ENCODE measurements at regions of chr17 and their contacts with region 1.

Region 1: GRCh38 chr17:82403662-82404660 is 14.2 kb upstream of the HEXD start:
- DNase-seq: no peak
- H3K4me3 ChIP-seq: no peak overlapping the region
- H3K27ac ChIP-seq: no peak overlapping the region
- H3K4me1 ChIP-seq: no peaks in the 10 kb centered on the region
- H3K27me3 ChIP-seq: no peaks in the 10 kb centered on the region
- CTCF ChIP-seq: no peak
- EP300 ChIP-seq: no peak
- POLR2A ChIP-seq: no peak

Region 2: DNA sequence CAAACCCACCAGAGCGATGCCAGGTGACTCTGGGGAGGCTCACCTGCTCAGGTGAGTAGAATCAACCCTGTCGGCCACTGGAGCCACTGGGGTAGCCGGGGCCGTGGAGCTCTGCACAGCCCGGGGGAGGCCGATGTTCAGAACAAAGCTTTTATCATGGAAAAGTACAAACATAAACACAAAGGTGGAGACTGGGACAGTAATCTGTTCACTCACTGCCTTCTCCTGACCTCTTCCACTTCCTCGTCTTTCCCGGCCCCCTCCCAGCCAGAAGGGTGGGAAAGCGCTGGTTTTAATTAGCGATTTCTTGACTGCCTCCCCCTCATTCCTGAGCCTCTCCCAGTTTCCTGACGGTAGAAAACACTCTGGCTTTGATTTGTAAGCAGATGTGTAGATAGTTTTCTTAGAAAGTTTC is 54.7 kb before region 1 on chr17:
- intact Hi-C with region 1: no loop called
- DNase-seq: no peak
- H3K4me3 ChIP-seq: no peak overlapping the region
- H3K27ac ChIP-seq: no peak overlapping the region
- H3K4me1 ChIP-seq: peaks cover 3% of the 10 kb centered on the region
- H3K27me3 ChIP-seq: no peaks in the 10 kb centered on the region
- CTCF ChIP-seq: no peak
- EP300 ChIP-seq: no peak
- POLR2A ChIP-seq: no peak

Region 3: DNA sequence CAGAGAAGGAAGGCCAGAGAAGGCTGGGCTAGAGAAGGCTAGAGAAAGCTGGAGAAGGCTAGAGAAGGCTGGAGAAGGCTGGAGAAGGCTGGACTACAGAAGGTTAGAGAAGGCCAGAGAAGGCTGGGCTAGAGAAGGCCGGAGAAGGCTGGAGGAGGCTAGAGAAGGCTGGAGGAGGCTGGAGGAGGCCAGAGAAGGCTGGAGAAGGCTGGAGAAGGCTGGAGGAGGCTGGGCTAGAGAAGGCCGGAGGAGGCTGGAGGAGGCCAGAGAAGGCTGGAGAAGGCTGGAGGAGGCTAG is 20.9 kb after region 1 on chr17:
- intact Hi-C with region 1: loop called in 1 of 4 experiments (anchors 1 kb)
- DNase-seq: no peak
- H3K4me3 ChIP-seq: no peak overlapping the region
- H3K27ac ChIP-seq: no peak overlapping the region
- H3K4me1 ChIP-seq: no peaks in the 10 kb centered on the region
- H3K27me3 ChIP-seq: no peaks in the 10 kb centered on the region
- CTCF ChIP-seq: no peak
- EP300 ChIP-seq: no peak
- POLR2A ChIP-seq: no peak